Mammary epithelial cell (primary cell): ENCODE measurements at regions of chr7 and their contacts with region 1.

Region 1: GRCh38 chr7:129923709-129924108 is 29.1 kb downstream of the UBE2H start:
- DNase-seq: peak; percentile 62
- H3K4me3 ChIP-seq: no peak overlapping the region
- H3K27ac ChIP-seq: no peak overlapping the region
- H3K4me1 ChIP-seq: no peaks in the 10 kb centered on the region
- H3K27me3 ChIP-seq: no peaks in the 10 kb centered on the region
- CTCF ChIP-seq: no peak

Region 2: DNA sequence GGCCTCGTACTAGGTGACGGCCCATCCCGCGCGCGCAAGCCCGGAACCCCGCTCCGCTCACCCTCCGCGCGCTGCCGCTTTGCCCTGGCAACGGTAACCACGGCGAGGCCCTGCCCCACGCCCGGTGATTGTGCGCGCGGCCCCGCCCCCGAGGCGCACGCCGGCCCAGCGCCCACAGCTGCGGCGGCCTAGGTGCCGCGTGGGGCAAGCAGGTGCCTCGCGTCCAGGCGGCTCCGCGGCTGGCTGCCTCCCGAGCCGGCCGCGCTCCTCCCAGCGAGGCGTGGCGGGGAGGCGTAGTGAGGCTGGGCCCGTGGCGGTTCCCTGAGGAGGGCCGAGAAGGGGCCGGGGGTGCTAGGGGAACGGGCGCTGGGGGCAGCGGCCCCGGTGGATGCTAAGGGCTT is 421.3 kb before region 1 on chr7 and contains the start of gene SMKR1:
- CTCF ChIA-PET with region 1: no interaction called
- dilution Hi-C with region 1: no loop called
- in situ Hi-C with region 1: no loop called
- intact Hi-C with region 1: no loop called
- DNase-seq: peak; percentile 60
- H3K4me3 ChIP-seq: peak within 1 kb of the TSS; percentile 52 to 61 (median 53)
- H3K27ac ChIP-seq: no peak within 1 kb of the TSS
- H3K4me1 ChIP-seq: peaks cover 7% of the 10 kb centered on the region
- H3K27me3 ChIP-seq: no peaks in the 10 kb centered on the region
- CTCF ChIP-seq: no peak
- total RNA-seq, gene SMKR1: 0.80 TPM in 1 of 2 donors, not detected in the other

Region 3: GRCh38 chr7:129550693-129551360 is 372.9 kb before region 1 on chr7:
- CTCF ChIA-PET with region 1: interaction called, 11 read pairs
- dilution Hi-C with region 1: no loop called
- in situ Hi-C with region 1: no loop called
- intact Hi-C with region 1: no loop called
- DNase-seq: no peak
- H3K4me3 ChIP-seq: no peak overlapping the region
- H3K27ac ChIP-seq: no peak overlapping the region
- H3K4me1 ChIP-seq: peaks cover 6% of the 10 kb centered on the region
- H3K27me3 ChIP-seq: no peaks in the 10 kb centered on the region
- CTCF ChIP-seq: no peak

Region 4: GRCh38 chr7:129748356-129749109 is 175.2 kb before region 1 on chr7:
- CTCF ChIA-PET with region 1: no interaction called
- dilution Hi-C with region 1: no loop called
- in situ Hi-C with region 1: no loop called
- intact Hi-C with region 1: no loop called
- DNase-seq: no peak
- H3K4me3 ChIP-seq: no peak overlapping the region
- H3K27ac ChIP-seq: no peak overlapping the region
- H3K4me1 ChIP-seq: peaks cover 15% of the 10 kb centered on the region
- H3K27me3 ChIP-seq: no peaks in the 10 kb centered on the region
- CTCF ChIP-seq: no peak